ENCODE measurements at regions of chr18 and their contacts with region 1.

Region 1: GRCh38 chr18:42114310-42114943 is 159.4 kb downstream of the PIK3C3 start:
- DNase-seq: peak; percentile 75
- ATAC-seq: peak; percentile 97
- H3K4me3 ChIP-seq: no peak overlapping the region
- H3K27ac ChIP-seq: no peak overlapping the region
- H3K4me1 ChIP-seq: peaks cover 4% of the 10 kb centered on the region
- H3K27me3 ChIP-seq: no peaks in the 10 kb centered on the region
- CTCF ChIP-seq: peak; percentile 96
- POLR2A ChIP-seq: no peak
- RAD21 ChIP-seq: peak; percentile 95

Region 2: GRCh38 chr18:42183746-42184145 is 69.3 kb after region 1 on chr18:
- CTCF ChIA-PET with region 1: no interaction called
- POLR2A ChIA-PET with region 1: no interaction called
- dilution Hi-C with region 1: no loop called
- in situ Hi-C with region 1: no loop called
- intact Hi-C with region 1: no loop called
- DNase-seq: peak; percentile 61
- ATAC-seq: peak; percentile 79
- H3K4me3 ChIP-seq: no peak overlapping the region
- H3K27ac ChIP-seq: no peak overlapping the region
- H3K4me1 ChIP-seq: peaks cover 2% of the 10 kb centered on the region; the same call in 1 of the 2 replicates
- H3K27me3 ChIP-seq: no peaks in the 10 kb centered on the region; the same call in 1 of the 2 replicates
- CTCF ChIP-seq: no peak
- POLR2A ChIP-seq: no peak
- RAD21 ChIP-seq: no peak

Region 3: DNA sequence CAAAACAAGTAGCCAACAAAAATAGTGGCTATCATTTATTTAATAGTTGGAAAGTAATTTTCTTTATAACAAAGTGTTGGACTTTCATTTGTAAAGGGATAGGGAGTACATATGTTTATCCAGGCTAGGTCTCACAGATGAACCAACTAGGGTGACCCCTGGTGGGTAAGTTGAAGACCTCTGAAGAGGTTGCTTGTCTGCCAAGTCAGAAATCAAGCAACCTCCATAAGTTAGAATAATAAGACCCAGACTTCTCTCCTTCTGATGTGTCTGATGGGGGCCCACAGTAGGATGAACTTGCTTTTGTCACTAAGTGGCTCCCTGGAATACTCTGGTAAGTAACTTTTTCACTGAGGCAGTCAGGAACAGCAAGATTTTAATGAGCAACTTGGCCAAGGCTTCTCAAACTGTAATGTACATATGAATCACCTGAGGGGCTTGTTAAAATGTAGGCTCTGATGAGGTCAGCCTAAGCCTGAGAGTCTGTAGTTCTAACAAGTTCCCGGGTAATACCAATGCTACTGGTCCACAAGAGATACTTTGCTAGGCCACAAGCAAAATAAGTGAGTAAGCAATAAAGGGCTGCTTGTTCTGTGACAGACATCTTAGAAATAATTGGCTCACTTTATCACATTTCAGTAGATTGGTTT is 160.2 kb after region 1 on chr18:
- CTCF ChIA-PET with region 1: interaction called, 8 read pairs
- POLR2A ChIA-PET with region 1: no interaction called
- dilution Hi-C with region 1: no loop called
- in situ Hi-C with region 1: no loop called
- intact Hi-C with region 1: loop called (anchors 5 kb)
- DNase-seq: peak; percentile 10
- ATAC-seq: no peak
- H3K4me3 ChIP-seq: no peak overlapping the region
- H3K27ac ChIP-seq: no peak overlapping the region
- H3K4me1 ChIP-seq: no peaks in the 10 kb centered on the region
- H3K27me3 ChIP-seq: no peaks in the 10 kb centered on the region
- CTCF ChIP-seq: 0 out of 2 replicates have a peak, but pooled peaks have one; percentile 9
- POLR2A ChIP-seq: no peak
- RAD21 ChIP-seq: no peak

Region 4: GRCh38 chr18:42298759-42299675 is 184.6 kb after region 1 on chr18:
- CTCF ChIA-PET with region 1: interaction called, 14 read pairs
- POLR2A ChIA-PET with region 1: no interaction called
- dilution Hi-C with region 1: no loop called
- in situ Hi-C with region 1: no loop called
- intact Hi-C with region 1: no loop called
- DNase-seq: peak; percentile 66
- ATAC-seq: peak; percentile 89
- H3K4me3 ChIP-seq: no peak overlapping the region
- H3K27ac ChIP-seq: no peak overlapping the region
- H3K4me1 ChIP-seq: no peaks in the 10 kb centered on the region
- H3K27me3 ChIP-seq: no peaks in the 10 kb centered on the region
- CTCF ChIP-seq: peak; percentile 81
- POLR2A ChIP-seq: no peak
- RAD21 ChIP-seq: peak; percentile 63

Region 5: DNA sequence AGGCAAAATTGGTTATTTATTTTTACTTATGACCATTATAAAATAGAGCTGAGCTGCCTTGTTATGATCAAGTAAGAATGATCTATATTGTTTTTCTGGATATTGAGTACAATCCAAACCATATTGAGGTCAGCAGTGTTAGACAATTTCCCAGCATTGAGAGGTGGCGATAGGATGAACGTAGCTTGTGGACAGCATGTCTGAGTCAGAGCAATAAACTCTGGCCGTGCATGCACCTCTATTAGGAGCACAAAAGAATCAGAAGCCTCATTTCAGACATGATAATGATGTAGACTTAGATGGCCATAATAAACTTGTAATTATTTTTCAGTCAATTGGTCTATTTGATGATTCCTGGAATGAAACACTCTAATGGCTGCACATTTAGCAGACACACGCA is 509.5 kb after region 1 on chr18:
- CTCF ChIA-PET with region 1: no interaction called
- POLR2A ChIA-PET with region 1: no interaction called
- dilution Hi-C with region 1: no loop called
- in situ Hi-C with region 1: no loop called
- intact Hi-C with region 1: no loop called
- DNase-seq: no peak
- ATAC-seq: no peak
- H3K4me3 ChIP-seq: no peak overlapping the region
- H3K27ac ChIP-seq: no peak overlapping the region
- H3K4me1 ChIP-seq: no peaks in the 10 kb centered on the region
- H3K27me3 ChIP-seq: no peaks in the 10 kb centered on the region
- CTCF ChIP-seq: no peak
- POLR2A ChIP-seq: no peak
- RAD21 ChIP-seq: no peak

Region 6: DNA sequence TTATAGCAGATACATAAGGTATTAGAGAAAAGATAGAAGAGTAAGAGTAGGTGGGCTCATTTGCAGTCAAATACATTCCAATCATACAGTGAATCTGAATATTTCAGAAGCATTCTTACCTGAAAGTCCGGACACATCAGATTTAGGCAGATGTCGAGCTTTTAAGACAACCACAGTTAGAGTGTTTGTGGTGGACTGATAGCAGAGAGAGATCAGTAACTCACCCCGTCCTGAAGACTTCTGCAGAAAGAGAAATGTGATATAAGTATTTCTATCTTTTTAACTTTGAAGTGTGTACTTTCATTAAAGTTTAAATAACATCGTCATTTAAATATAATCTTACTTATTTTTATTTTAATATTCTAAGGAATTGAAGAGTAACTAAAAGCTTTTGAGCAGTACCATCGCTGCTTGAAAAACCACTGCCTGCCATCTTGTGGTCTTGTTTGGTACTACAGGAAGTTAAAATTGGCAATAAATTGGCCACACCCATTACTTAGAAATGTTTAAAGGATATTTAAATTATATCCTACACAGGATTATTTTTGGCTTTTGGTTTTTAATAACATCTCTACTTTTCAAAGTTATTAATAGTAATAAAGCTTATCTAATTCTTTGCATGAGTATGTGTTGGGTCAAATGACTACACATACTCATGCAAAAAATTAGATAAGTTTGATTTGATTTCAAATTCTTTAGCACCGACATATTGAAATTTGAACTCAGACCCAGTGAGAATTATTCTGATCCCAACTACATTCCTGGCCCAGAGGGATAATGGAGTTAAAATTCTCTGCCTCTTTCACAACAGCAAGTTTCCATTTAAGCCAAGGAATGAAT is 1157.4 kb after region 1 on chr18:
- CTCF ChIA-PET with region 1: interaction called, 43 read pairs
- POLR2A ChIA-PET with region 1: no interaction called
- dilution Hi-C with region 1: no loop called
- in situ Hi-C with region 1: loop called (anchors 10 kb)
- intact Hi-C with region 1: loop called (anchors 1 kb)
- DNase-seq: peak; percentile 61
- ATAC-seq: peak; percentile 72
- H3K4me3 ChIP-seq: no peak overlapping the region
- H3K27ac ChIP-seq: no peak overlapping the region
- H3K4me1 ChIP-seq: no peaks in the 10 kb centered on the region
- H3K27me3 ChIP-seq: no peaks in the 10 kb centered on the region
- CTCF ChIP-seq: peak; percentile 70
- POLR2A ChIP-seq: no peak
- RAD21 ChIP-seq: peak; percentile 61

Region 7: GRCh38 chr18:43587538-43588153 is 1473.2 kb after region 1 on chr18:
- CTCF ChIA-PET with region 1: interaction called, 5 read pairs
- POLR2A ChIA-PET with region 1: no interaction called
- dilution Hi-C with region 1: no loop called
- in situ Hi-C with region 1: loop called (anchors 25 kb)
- intact Hi-C with region 1: loop called (anchors 1 kb)
- DNase-seq: peak; percentile 41
- ATAC-seq: peak; percentile 88
- H3K4me3 ChIP-seq: no peak overlapping the region
- H3K27ac ChIP-seq: no peak overlapping the region
- H3K4me1 ChIP-seq: no peaks in the 10 kb centered on the region
- H3K27me3 ChIP-seq: no peaks in the 10 kb centered on the region; the same call in 1 of the 2 replicates
- CTCF ChIP-seq: peak; percentile 67
- POLR2A ChIP-seq: no peak
- RAD21 ChIP-seq: peak; percentile 51

Region 8: DNA sequence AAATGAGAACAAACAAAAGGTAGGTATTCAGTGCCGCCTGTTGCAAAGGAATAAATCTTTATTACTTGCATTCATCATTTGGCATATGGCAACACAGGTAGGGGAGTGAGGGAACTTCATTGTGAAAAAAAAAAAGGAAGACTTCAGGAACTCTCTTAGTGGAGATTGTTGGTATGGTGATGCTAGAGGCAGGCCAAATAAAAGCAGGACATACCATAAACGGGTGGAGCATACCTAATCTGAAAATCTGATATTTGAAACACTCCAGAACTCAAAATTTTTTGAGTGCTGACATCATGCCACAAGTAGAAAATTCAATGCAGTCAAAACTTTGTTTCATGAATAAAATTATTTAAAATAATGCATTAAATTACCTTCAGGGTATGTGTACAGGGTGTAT is 1588.6 kb after region 1 on chr18:
- CTCF ChIA-PET with region 1: no interaction called
- POLR2A ChIA-PET with region 1: no interaction called
- dilution Hi-C with region 1: no loop called
- in situ Hi-C with region 1: no loop called
- intact Hi-C with region 1: no loop called
- DNase-seq: no peak
- ATAC-seq: no peak
- H3K4me3 ChIP-seq: no peak overlapping the region
- H3K27ac ChIP-seq: no peak overlapping the region
- H3K4me1 ChIP-seq: no peaks in the 10 kb centered on the region
- H3K27me3 ChIP-seq: no peaks in the 10 kb centered on the region; the same call in 1 of the 2 replicates
- CTCF ChIP-seq: no peak
- POLR2A ChIP-seq: no peak
- RAD21 ChIP-seq: no peak

Measured in IMR-90 (cell line).